CD4-positive, alpha-beta memory T cell (primary cell): ENCODE measurements at regions of chr14 and their contacts with region 1.

Region 1: GRCh38 chr14:76784266-76785264 is 23.3 kb downstream of the VASH1 start:
- DNase-seq: peak; percentile 20 to 68 (median 58)
- H3K4me3 ChIP-seq: no peak overlapping the region
- H3K4me3 Mint-ChIP-seq: no peak overlapping the region
- H3K27ac ChIP-seq: no peak overlapping the region
- H3K27ac Mint-ChIP-seq: peak overlapping the region; percentile 35 to 95 (median 82)
- H3K4me1 ChIP-seq: peaks cover 25% of the 10 kb centered on the region
- H3K4me1 Mint-ChIP-seq: peaks cover 13 to 24% (median 14%) of the 10 kb centered on the region in 4 donors
- H3K27me3 ChIP-seq: no peaks in the 10 kb centered on the region
- H3K27me3 Mint-ChIP-seq: no peaks in the 10 kb centered on the region

Region 2: GRCh38 chr14:76720382-76720813 is 64.2 kb before region 1 on chr14:
- CTCF ChIA-PET with region 1: interaction called, 27 read pairs
- POLR2A ChIA-PET with region 1: no interaction called
- intact Hi-C with region 1: no loop called
- DNase-seq: no peak
- H3K4me3 ChIP-seq: no peak overlapping the region
- H3K4me3 Mint-ChIP-seq: peak overlapping the region in 1 of 8 donors; percentile 24
- H3K27ac ChIP-seq: no peak overlapping the region
- H3K27ac Mint-ChIP-seq: peak overlapping the region in 4 of 7 donors; percentile 60 to 81 (median 70)
- H3K4me1 ChIP-seq: peaks cover 7% of the 10 kb centered on the region
- H3K4me1 Mint-ChIP-seq: no peaks in the 10 kb centered on the region
- H3K27me3 ChIP-seq: no peaks in the 10 kb centered on the region
- H3K27me3 Mint-ChIP-seq: peaks cover 19 to 27% of the 10 kb centered on the region in 2 donors

Region 3: GRCh38 chr14:76761136-76761959 is 23.2 kb before region 1 on chr14 and contains the start of gene VASH1:
- CTCF ChIA-PET with region 1: interaction called, 22 read pairs
- POLR2A ChIA-PET with region 1: interaction called, 5 read pairs
- intact Hi-C with region 1: no loop called
- DNase-seq: peak; percentile 14 to 67 (median 57)
- H3K4me3 ChIP-seq: peak within 1 kb of the TSS; percentile 29 to 69
- H3K4me3 Mint-ChIP-seq: peak within 1 kb of the TSS; percentile 78 to 92 (median 86)
- H3K27ac ChIP-seq: no peak within 1 kb of the TSS
- H3K27ac Mint-ChIP-seq: peak within 1 kb of the TSS in 5 of 7 donors; percentile 82 to 94 (median 86)
- H3K4me1 ChIP-seq: peaks cover 22% of the 10 kb centered on the region
- H3K4me1 Mint-ChIP-seq: peaks cover 4 to 48% (median 15%) of the 10 kb centered on the region in 4 donors
- H3K27me3 ChIP-seq: no peaks in the 10 kb centered on the region
- H3K27me3 Mint-ChIP-seq: peaks cover 13 to 18% of the 10 kb centered on the region in 2 donors
- total RNA-seq, gene VASH1: 9.3 to 12.6 TPM

Region 4: DNA sequence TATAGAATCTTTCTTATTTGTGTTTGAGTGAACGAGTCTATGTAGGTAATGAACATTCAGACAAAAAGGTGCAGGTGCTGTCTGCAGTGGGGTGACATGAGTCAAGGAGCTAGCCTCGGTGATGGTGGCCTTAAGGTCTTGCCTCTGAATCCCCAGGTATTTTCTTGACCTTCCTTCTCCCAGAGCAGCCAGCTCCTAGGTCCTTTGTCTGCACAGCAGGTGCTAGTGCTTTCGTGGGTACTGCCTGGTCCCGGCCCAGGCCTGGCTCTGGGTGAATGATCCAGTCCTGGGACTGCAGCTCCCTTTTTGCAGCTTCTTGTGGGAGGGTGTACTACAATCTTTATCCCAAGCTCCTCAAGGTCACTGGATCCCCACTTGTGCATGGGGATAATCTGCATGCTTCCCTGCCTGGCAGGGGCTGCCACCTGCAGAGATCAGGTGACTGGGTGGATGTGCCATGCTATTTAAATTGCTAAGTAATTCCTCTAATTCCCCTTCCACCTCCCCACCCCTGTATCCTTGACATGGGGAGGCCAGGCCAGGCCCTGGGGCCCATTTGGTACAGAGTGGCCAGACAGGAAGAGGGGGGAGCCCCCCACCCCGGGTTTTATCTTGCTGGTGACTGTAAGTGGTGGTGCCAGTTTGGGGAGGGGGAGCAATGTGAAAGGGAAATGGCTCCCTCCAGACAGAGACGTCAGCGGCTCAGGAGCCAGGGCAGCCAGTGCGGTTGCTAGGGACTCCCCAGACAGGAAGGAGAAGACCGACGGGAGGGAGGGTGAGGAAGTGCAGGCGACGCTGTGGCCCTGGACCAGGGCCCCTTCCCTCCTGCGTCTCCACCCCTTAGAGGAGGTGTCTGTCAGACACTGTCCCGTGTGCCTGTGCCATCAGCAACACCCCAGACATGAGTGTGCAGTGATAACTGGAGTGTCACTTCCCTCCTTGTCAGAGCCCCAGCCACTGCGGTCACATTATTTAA is 16.6 kb before region 1 on chr14:
- CTCF ChIA-PET with region 1: interaction called, 30 read pairs
- POLR2A ChIA-PET with region 1: interaction called, 4 read pairs
- intact Hi-C with region 1: no loop called
- DNase-seq: peak; percentile 16 to 96 (median 81)
- H3K4me3 ChIP-seq: peak overlapping the region in 1 of 2 donors; percentile 2
- H3K4me3 Mint-ChIP-seq: peak overlapping the region in 6 of 8 donors; percentile 16 to 69 (median 60)
- H3K27ac ChIP-seq: peak overlapping the region; percentile 75
- H3K27ac Mint-ChIP-seq: peak overlapping the region; percentile 74 to 94 (median 94)
- H3K4me1 ChIP-seq: peaks cover 33% of the 10 kb centered on the region
- H3K4me1 Mint-ChIP-seq: peaks cover 11 to 49% (median 17%) of the 10 kb centered on the region in 4 donors
- H3K27me3 ChIP-seq: no peaks in the 10 kb centered on the region
- H3K27me3 Mint-ChIP-seq: peaks cover 0 to 1% of the 10 kb centered on the region in 2 donors

Region 5: DNA sequence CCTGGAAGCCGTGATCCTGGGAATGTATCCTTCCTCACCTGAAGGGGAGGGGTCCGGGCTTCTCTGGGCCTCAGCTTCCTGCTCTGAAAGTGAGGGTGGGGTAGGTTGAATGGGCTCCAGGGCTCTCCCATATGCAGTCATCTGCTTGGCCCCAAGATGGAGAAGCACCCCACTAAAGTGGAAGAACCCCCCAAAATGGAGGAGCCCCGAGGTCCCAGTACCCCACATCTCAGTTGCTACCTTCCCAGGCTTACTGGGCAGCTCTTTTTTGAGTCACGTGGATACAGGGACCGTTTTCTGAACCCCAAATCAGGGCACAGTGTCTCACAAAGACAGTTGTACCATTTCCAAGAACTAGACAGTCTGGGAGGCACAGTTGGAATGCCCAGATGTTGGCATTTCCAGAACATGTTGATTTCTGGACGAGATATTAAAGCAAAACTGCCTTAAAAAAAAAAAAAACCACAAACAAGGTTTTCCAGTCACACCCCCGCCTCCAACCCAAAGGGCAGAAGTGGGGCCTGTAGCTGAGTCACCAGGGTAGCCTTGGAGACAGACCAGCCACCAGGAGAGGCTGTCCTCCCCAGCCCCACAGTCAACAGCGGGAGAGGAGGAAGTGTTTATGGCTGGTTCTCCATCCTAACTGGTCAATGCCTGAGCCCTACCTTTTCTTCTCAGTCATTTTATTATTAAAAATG is 11.2 kb before region 1 on chr14:
- CTCF ChIA-PET with region 1: interaction called, 30 read pairs
- POLR2A ChIA-PET with region 1: interaction called, 3 read pairs
- intact Hi-C with region 1: no loop called
- DNase-seq: no peak
- H3K4me3 ChIP-seq: no peak overlapping the region
- H3K4me3 Mint-ChIP-seq: no peak overlapping the region
- H3K27ac ChIP-seq: no peak overlapping the region
- H3K27ac Mint-ChIP-seq: no peak overlapping the region
- H3K4me1 ChIP-seq: peaks cover 16% of the 10 kb centered on the region
- H3K4me1 Mint-ChIP-seq: peaks cover 4 to 15% (median 9%) of the 10 kb centered on the region in 4 donors
- H3K27me3 ChIP-seq: no peaks in the 10 kb centered on the region
- H3K27me3 Mint-ChIP-seq: no peaks in the 10 kb centered on the region

Region 6: GRCh38 chr14:76812211-76813044 is 27.9 kb after region 1 on chr14 and contains the start of gene ANGEL1:
- CTCF ChIA-PET with region 1: interaction called, 10 read pairs
- POLR2A ChIA-PET with region 1: interaction called, 14 read pairs
- intact Hi-C with region 1: loop called (anchors 2 kb)
- DNase-seq: peak; percentile 94 to 97 (median 96)
- H3K4me3 ChIP-seq: peak within 1 kb of the TSS; percentile 43 to 78
- H3K4me3 Mint-ChIP-seq: peak within 1 kb of the TSS; percentile 87 to 98 (median 94)
- H3K27ac ChIP-seq: peak within 1 kb of the TSS; percentile 76
- H3K27ac Mint-ChIP-seq: peak within 1 kb of the TSS; percentile 93 to 98 (median 95)
- H3K4me1 ChIP-seq: peaks cover 24% of the 10 kb centered on the region
- H3K4me1 Mint-ChIP-seq: peaks cover 21 to 37% (median 28%) of the 10 kb centered on the region in 4 donors
- H3K27me3 ChIP-seq: no peaks in the 10 kb centered on the region
- H3K27me3 Mint-ChIP-seq: peaks cover 0 to 2% of the 10 kb centered on the region in 2 donors
- total RNA-seq, gene ANGEL1: 26.1 to 28.0 TPM